ENCODE measurements at regions of chr11 and their contacts with region 1.

Region 1: GRCh38 chr11:61667684-61668305 is 12.4 kb upstream of the DAGLA start:
- DNase-seq: no peak
- ATAC-seq: peak; percentile 71
- H3K4me3 ChIP-seq: peak overlapping the region; percentile 16 to 55 (median 23); a peak in 4 of 6 replicates
- H3K27ac ChIP-seq: peak overlapping the region; percentile 69
- H3K4me1 ChIP-seq: peaks cover 56% of the 10 kb centered on the region
- H3K27me3 ChIP-seq: no peaks in the 10 kb centered on the region
- CTCF ChIP-seq: peak; percentile 28; the same call in 1 of the 2 replicates
- EP300 ChIP-seq: no peak
- POLR2A ChIP-seq: no peak
- RAD21 ChIP-seq: no peak

Region 2: GRCh38 chr11:61384271-61385242 is 283.2 kb before region 1 on chr11:
- CTCF ChIA-PET with region 1: no interaction called
- POLR2A ChIA-PET with region 1: no interaction called
- in situ Hi-C with region 1: no loop called
- intact Hi-C with region 1: no loop called
- DNase-seq: peak; percentile 39
- ATAC-seq: peak; percentile 82
- H3K4me3 ChIP-seq: no peak overlapping the region
- H3K27ac ChIP-seq: no peak overlapping the region
- H3K4me1 ChIP-seq: peaks cover 9% of the 10 kb centered on the region
- H3K27me3 ChIP-seq: no peaks in the 10 kb centered on the region
- CTCF ChIP-seq: peak; percentile 83
- EP300 ChIP-seq: no peak
- POLR2A ChIP-seq: no peak
- RAD21 ChIP-seq: 0 out of 2 replicates have a peak, but pooled peaks have one; percentile 18

Region 3: DNA sequence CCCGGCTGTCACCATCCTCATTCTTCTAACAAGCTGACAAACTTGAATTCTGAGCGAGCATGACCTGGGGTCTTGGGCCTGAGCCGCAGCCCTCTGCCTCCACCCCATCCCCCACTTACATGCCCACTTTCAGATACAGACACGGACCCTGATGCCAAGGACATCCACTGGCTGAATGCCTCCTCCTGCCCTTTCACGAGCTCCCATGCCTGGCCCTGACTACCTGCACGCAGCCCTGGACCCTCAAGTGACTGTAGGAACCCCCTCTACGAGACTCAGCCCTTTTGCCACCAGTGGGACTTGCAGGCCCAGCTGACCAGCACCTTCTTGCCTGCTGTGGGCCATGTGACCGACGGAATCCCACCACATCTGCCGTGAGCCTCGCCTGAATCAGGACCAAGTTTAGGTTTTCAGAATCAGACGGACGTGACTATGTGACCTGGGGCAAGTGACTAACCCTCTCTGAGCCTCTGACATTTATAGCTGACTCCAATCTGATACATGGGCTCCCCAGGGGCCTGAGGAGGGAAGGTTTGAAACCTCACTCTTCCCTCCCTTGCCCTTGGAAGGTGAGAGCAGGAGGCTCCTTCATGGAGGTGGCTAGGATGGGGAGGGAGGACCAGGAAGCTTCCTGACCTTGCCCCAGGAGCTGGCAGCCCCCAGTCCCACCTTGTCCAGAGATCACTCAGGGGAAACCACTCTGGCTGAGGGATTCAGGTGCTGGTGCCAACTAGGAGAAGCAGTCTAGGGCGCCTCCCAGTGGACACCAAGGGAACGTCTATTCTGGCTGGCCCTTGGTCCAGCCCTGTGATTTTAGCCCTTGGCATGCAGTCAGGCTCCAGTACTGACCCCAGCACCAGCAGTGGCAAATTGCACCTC is 40.0 kb before region 1 on chr11:
- CTCF ChIA-PET with region 1: no interaction called
- POLR2A ChIA-PET with region 1: no interaction called
- in situ Hi-C with region 1: no loop called
- intact Hi-C with region 1: no loop called
- DNase-seq: peak; percentile 57
- ATAC-seq: peak; percentile 93
- H3K4me3 ChIP-seq: no peak overlapping the region
- H3K27ac ChIP-seq: no peak overlapping the region
- H3K4me1 ChIP-seq: peaks cover 18% of the 10 kb centered on the region
- H3K27me3 ChIP-seq: peaks cover 0 to 2% of the 10 kb centered on the region in 2 experiments; a peak in 2 of 5 replicates
- CTCF ChIP-seq: peak; percentile 94
- EP300 ChIP-seq: no peak
- POLR2A ChIP-seq: no peak
- RAD21 ChIP-seq: peak; percentile 91

Region 4: DNA sequence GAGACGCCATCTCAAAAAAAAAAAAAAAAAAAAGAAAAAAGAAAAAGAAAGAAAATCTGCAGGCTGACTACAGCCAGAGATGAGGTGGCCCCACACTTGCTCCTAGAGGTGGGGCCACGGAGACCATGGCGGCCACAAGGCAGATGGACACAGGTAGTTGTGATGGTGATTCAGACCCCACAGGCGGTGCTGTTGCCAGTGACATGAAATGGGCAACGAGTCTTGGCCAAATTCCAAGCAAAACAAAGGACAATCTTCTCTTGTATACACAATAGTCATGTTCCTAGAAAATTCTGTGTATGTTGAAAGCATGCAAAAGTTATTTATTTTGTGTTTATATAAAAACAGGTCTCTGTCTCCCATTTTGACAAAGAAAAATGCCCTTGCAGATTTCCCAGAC is 10.2 kb before region 1 on chr11:
- CTCF ChIA-PET with region 1: interaction called, 5 read pairs
- POLR2A ChIA-PET with region 1: interaction called, 10 read pairs
- in situ Hi-C with region 1: no loop called
- intact Hi-C with region 1: no loop called
- DNase-seq: peak; percentile 76
- ATAC-seq: peak; percentile 28; the same call in 2 of the 3 replicates
- H3K4me3 ChIP-seq: no peak overlapping the region
- H3K27ac ChIP-seq: no peak overlapping the region
- H3K4me1 ChIP-seq: peaks cover 54% of the 10 kb centered on the region
- H3K27me3 ChIP-seq: no peaks in the 10 kb centered on the region
- CTCF ChIP-seq: peak; percentile 54
- EP300 ChIP-seq: no peak
- POLR2A ChIP-seq: no peak
- RAD21 ChIP-seq: no peak

Region 5: DNA sequence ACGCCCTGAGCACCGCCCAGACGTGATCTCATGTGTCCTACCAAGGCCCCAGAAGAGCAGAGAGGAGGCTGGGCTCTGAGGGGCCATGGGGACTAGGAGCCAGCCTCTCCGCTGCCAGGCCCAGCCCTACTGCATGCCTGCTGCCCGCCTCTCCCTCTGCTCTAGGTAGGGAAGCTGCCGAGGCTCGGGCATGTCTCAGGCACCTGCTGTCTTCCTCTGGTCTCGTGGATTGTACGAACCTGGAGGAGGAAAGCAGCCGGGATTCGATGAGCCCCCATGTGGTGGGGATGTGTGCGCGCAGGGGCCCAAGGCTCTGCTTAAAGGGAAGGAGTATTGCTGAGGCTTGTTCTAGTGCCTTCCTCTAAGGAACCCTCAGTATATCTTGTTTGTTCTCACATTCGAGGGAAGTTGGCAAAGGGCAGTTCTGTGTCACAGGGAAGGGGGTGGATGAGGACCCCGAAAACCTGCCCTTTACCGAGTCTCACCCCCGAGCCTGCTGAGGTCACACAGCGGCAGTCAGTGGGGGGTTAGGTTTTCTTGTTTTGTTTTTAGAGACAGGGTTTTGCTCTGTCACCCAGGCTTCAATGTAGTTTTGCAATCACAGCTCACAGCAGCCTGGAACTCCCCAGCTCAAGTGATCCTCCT is 33.6 kb after region 1 on chr11:
- CTCF ChIA-PET with region 1: interaction called, 3 read pairs
- POLR2A ChIA-PET with region 1: interaction called, 3 read pairs
- in situ Hi-C with region 1: no loop called
- intact Hi-C with region 1: loop called (anchors 5 kb)
- DNase-seq: peak; percentile 37
- ATAC-seq: peak; percentile 73
- H3K4me3 ChIP-seq: no peak overlapping the region
- H3K27ac ChIP-seq: no peak overlapping the region
- H3K4me1 ChIP-seq: peaks cover 26% of the 10 kb centered on the region
- H3K27me3 ChIP-seq: no peaks in the 10 kb centered on the region
- CTCF ChIP-seq: peak; percentile 51
- EP300 ChIP-seq: no peak
- POLR2A ChIP-seq: no peak
- RAD21 ChIP-seq: 0 out of 2 replicates have a peak, but pooled peaks have one; percentile 26

Measured in HepG2 (cell line).